Mammary epithelial cell (primary cell): ENCODE measurements at regions of chr1 and their contacts with region 1.

Region 1: GRCh38 chr1:197356723-197357533 is 88.9 kb downstream of the CRB1 start:
- DNase-seq: peak; percentile 54
- H3K4me3 ChIP-seq: no peak overlapping the region
- H3K27ac ChIP-seq: no peak overlapping the region
- H3K4me1 ChIP-seq: no peaks in the 10 kb centered on the region
- H3K27me3 ChIP-seq: peaks cover under 1% of the 10 kb centered on the region
- CTCF ChIP-seq: peak; percentile 60 to 68

Region 2: DNA sequence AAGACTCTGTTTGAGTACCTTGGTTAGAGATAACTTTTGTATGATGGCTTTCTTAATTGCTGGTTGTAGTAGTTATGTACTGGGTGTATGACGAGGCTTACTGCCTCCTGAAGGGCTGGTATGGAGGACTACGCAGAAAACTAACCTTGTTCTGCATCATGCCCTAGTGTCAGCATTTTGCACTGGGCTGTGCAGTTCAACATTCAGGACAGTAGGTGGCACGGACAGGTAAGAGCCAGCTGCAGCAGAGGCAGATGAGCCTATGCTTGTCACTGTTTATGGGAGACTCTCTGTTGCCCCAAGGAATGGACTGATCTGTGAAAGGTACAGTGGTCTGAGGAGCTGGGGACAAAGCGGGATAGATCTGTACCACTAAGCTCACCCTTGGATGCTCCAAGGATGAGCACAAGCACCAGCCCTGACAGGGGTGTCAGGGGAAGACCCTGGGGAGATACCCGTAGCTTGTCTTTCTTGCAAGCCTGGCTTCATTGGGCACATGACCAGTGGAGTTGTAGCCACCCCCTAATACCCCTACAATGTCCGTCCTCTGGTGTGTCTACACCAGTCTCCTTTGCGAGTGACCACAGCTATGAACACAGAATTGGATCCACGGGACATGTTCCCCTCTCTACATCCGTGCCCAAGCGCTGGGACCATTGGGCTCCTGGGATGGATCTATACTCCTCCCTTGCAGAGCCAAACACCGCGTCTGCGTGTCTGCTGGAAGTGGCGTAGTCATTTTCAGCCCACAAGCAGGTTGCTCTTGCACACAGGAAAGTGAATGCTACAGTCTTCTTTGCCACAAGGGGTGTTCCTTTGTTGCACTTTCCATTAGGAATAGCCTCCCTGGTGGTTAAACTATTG is 633.4 kb before region 1 on chr1:
- CTCF ChIA-PET with region 1: interaction called, 6 read pairs
- dilution Hi-C with region 1: no loop called
- in situ Hi-C with region 1: loop called in 1 of 2 experiments (anchors 25 kb)
- intact Hi-C with region 1: loop called (anchors 1 kb)
- DNase-seq: peak; percentile 57
- H3K4me3 ChIP-seq: no peak overlapping the region
- H3K27ac ChIP-seq: no peak overlapping the region
- H3K4me1 ChIP-seq: no peaks in the 10 kb centered on the region
- H3K27me3 ChIP-seq: peaks cover 2% of the 10 kb centered on the region
- CTCF ChIP-seq: peak; percentile 72 to 77

Region 3: GRCh38 chr1:196732526-196732925 is 624.4 kb before region 1 on chr1:
- CTCF ChIA-PET with region 1: no interaction called
- dilution Hi-C with region 1: no loop called
- in situ Hi-C with region 1: loop called in 1 of 2 experiments (anchors 25 kb)
- intact Hi-C with region 1: no loop called
- DNase-seq: no peak
- H3K4me3 ChIP-seq: no peak overlapping the region
- H3K27ac ChIP-seq: no peak overlapping the region
- H3K4me1 ChIP-seq: no peaks in the 10 kb centered on the region
- H3K27me3 ChIP-seq: no peaks in the 10 kb centered on the region
- CTCF ChIP-seq: peak in 1 of 2 donors; percentile 4

Region 4: DNA sequence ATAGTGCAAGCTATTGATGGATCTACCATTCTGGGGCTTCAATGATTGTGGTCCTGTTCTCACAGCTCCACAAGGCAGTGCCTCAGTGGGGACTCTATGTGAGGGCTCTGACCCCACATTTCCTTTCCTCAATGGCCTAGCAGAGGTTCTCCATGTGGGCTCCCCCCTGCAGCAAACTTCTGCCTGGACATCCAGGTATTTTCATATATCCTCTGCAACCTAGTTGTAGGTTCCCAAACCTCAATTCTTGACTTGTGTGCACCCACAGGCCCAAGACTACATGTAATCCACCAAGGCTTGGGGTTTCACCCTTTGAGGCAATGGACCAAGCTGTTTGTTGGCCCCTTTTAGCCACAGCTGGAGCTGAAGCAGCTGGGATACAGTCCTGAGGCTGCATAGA is 618.2 kb before region 1 on chr1:
- CTCF ChIA-PET with region 1: no interaction called
- dilution Hi-C with region 1: no loop called
- in situ Hi-C with region 1: loop called in 1 of 2 experiments (anchors 25 kb)
- intact Hi-C with region 1: loop called (anchors 5 kb)
- DNase-seq: no peak
- H3K4me3 ChIP-seq: no peak overlapping the region
- H3K27ac ChIP-seq: no peak overlapping the region
- H3K4me1 ChIP-seq: no peaks in the 10 kb centered on the region
- H3K27me3 ChIP-seq: peaks cover 1% of the 10 kb centered on the region
- CTCF ChIP-seq: no peak

Region 5: DNA sequence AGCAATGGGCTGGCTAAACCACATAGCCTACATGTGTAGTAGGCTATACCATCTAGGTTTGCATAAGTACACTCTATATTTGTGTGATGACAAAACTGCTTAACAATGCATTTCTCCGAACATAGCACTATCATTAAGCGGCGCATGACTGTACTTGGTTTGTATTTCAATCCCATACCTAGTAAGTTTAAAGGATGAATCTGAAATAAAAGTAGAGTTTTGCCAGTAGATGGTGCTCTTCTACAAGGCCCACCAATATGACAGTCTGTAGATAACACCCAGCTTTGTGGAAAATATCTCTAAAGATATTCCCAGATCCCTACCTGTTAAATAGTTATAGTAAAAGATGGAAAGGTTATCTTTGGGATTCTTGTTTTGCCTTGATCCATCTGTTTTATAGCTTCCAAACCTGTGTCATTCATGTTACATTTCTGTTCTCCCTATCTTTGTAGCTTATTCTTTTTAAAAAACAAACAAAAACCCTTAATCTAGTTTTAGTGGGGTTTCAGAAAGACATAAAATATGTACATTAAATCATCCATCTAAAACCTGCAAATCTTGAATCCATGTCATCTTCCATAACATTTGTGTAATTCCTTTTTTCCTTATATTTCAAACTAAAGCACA is 176.6 kb before region 1 on chr1:
- CTCF ChIA-PET with region 1: interaction called, 4 read pairs
- dilution Hi-C with region 1: no loop called
- in situ Hi-C with region 1: no loop called
- intact Hi-C with region 1: loop called (anchors 1 kb)
- DNase-seq: peak; percentile 45
- H3K4me3 ChIP-seq: no peak overlapping the region
- H3K27ac ChIP-seq: no peak overlapping the region
- H3K4me1 ChIP-seq: no peaks in the 10 kb centered on the region
- H3K27me3 ChIP-seq: no peaks in the 10 kb centered on the region
- CTCF ChIP-seq: peak; percentile 52 to 63

Region 6: GRCh38 chr1:197314682-197315081 is 42.2 kb before region 1 on chr1:
- CTCF ChIA-PET with region 1: no interaction called
- dilution Hi-C with region 1: no loop called
- in situ Hi-C with region 1: no loop called
- intact Hi-C with region 1: no loop called
- DNase-seq: no peak
- H3K4me3 ChIP-seq: no peak overlapping the region
- H3K27ac ChIP-seq: no peak overlapping the region
- H3K4me1 ChIP-seq: no peaks in the 10 kb centered on the region
- H3K27me3 ChIP-seq: no peaks in the 10 kb centered on the region
- CTCF ChIP-seq: no peak

Region 7: GRCh38 chr1:197327776-197328364 is 29.1 kb before region 1 on chr1:
- CTCF ChIA-PET with region 1: no interaction called
- dilution Hi-C with region 1: no loop called
- in situ Hi-C with region 1: no loop called
- intact Hi-C with region 1: loop called (anchors 1 kb)
- DNase-seq: no peak
- H3K4me3 ChIP-seq: no peak overlapping the region
- H3K27ac ChIP-seq: no peak overlapping the region
- H3K4me1 ChIP-seq: no peaks in the 10 kb centered on the region
- H3K27me3 ChIP-seq: no peaks in the 10 kb centered on the region
- CTCF ChIP-seq: peak; percentile 55 to 59

Region 8: DNA sequence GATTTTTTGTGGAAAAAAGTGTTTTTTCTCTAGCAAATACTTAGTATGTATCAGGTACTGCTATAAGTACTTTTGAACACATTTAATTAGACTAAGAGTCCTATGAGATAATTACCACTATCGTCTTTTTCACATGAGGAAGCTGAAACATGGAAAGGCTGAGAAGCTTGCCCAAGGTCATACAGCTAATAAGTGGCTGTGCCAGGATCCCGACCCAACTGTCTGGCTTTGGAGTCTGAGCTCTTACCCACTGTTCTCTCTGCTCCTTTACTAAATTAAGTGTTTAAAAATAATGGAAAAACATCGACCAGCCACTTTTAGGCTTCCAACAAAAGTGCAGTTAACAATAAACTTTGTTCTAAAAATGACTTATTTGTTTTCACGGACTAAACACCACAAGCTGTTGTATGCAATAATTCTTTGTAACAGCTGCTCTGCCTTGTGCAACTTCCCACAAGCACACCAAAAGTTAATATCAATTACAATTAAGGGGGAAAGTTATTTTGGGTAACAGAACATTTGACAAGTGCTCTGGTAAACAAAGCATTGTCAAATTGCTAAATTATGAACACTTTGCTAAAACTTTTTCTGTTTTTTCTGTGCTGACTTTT is 13.2 kb before region 1 on chr1:
- CTCF ChIA-PET with region 1: no interaction called
- dilution Hi-C with region 1: no loop called
- in situ Hi-C with region 1: no loop called
- intact Hi-C with region 1: no loop called
- DNase-seq: no peak
- H3K4me3 ChIP-seq: no peak overlapping the region
- H3K27ac ChIP-seq: no peak overlapping the region
- H3K4me1 ChIP-seq: no peaks in the 10 kb centered on the region
- H3K27me3 ChIP-seq: no peaks in the 10 kb centered on the region
- CTCF ChIP-seq: no peak

Region 9: DNA sequence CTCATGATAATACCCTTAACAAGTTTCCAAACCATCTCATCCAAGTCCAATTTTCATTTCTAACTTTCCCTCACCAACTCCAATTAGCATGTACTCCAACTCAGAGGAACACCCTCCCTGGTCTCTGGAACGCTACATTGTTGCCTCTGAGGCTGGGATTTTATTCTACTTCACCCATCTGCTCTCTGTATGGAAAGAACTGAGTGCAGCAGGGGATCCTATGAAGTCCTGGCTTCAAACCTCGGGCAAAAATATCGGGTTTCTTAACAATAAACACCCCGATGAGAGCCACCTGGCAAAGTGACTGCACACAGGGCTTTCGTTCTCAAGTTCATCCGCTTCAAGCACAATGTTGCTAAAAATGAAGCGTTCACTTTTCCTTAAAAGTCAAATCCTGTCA is 10.7 kb after region 1 on chr1:
- CTCF ChIA-PET with region 1: no interaction called
- dilution Hi-C with region 1: no loop called
- in situ Hi-C with region 1: no loop called
- intact Hi-C with region 1: no loop called
- DNase-seq: no peak
- H3K4me3 ChIP-seq: no peak overlapping the region
- H3K27ac ChIP-seq: no peak overlapping the region
- H3K4me1 ChIP-seq: no peaks in the 10 kb centered on the region
- H3K27me3 ChIP-seq: no peaks in the 10 kb centered on the region
- CTCF ChIP-seq: no peak

Region 10: DNA sequence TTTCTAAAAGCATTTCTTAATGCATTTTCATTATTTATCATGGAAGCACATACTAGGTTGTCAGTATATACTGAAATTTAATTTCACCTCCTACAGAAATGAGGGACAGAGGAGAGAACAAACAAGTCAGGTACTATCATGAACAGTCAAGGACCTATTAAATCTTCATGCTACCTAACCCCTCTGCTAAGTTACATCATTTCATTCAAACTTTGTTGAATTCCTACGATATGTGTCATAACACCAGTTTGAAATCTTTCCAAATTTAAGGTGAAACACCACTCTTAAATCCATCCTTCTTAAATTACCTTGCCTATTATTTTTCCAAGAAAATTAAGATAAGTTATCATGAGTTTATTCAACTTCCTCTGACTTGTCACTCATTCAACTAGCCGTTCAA is 339.4 kb after region 1 on chr1:
- CTCF ChIA-PET with region 1: no interaction called
- dilution Hi-C with region 1: no loop called
- in situ Hi-C with region 1: no loop called
- intact Hi-C with region 1: no loop called
- DNase-seq: peak; percentile 54
- H3K4me3 ChIP-seq: no peak overlapping the region
- H3K27ac ChIP-seq: no peak overlapping the region
- H3K4me1 ChIP-seq: peaks cover 5% of the 10 kb centered on the region
- H3K27me3 ChIP-seq: no peaks in the 10 kb centered on the region
- CTCF ChIP-seq: no peak